ENCODE measurements at regions of chr15 and their contacts with region 1.

Region 1: DNA sequence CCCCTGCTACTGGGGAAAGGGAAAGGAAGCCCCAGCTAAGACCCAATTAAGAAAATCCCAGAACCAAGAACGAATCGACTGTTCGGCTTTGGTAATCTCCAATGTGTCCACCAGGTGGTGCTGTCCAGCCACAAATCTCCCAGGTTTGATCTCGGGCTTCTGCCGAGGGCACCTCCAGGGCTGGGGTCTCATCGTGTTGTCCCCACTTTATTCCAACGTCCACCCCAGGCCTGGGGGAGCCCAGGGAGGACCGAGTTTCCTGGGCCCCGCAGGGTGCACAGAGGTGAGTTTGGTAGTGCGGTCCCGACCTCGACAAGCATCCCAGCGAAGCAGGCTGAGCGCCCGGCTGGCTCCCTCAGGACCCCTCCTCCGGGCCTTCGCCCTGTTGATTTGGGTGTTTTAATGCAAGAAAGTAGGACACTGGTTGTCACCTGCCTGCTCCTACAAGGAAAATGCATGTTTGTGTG is 185.1 kb downstream of the GOLGA6L6 start:
- DNase-seq: peak; percentile 88 to 91 (median 89)
- ATAC-seq: peak; percentile 86
- H3K4me3 ChIP-seq: no peak overlapping the region
- H3K27ac ChIP-seq: no peak overlapping the region
- H3K4me1 ChIP-seq: peaks cover 0 to 23% of the 10 kb centered on the region in 2 experiments; a peak in 1 of 5 replicates
- H3K27me3 ChIP-seq: peaks cover 7 to 19% of the 10 kb centered on the region in 2 experiments; a peak in 4 of 5 replicates
- CTCF ChIP-seq: peak; percentile 94 to 98 (median 96)
- EP300 ChIP-seq: no peak
- POLR2A ChIP-seq: no peak
- RAD21 ChIP-seq: peak; percentile 89 to 98

Region 2: DNA sequence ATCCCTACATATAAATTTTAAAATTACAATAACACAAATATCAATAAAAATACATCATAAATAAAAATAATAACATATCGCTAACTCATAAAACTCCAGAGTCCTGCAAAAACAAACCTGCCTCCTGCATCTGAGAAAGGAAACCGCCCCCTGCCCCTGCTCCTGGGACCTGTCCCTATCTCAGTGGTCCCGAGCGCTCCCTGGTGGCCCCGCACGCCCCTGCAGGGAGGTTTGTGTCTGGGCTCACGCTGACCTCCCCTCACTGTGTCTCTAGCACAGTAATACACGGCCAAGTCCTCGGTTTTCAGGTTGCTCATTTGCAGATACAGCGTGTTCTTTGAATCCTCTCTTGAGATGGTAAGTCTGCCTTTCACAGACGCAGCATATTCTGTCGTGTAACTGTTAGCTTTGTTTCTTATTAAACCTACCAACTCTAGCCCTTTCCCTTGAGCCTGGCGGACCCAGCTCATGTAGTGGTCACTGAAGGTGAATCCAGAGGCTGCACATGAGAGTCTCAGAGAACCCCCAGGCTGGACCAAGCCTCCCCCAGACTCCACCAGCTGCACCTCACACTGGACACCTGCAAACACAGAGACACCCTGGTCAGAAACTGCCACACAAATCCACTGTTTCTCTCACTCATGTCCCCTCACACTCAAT is 369.0 kb before region 1 on chr15:
- CTCF ChIA-PET with region 1: no interaction called
- POLR2A ChIA-PET with region 1: no interaction called
- in situ Hi-C with region 1: no loop called
- intact Hi-C with region 1: no loop called
- DNase-seq: peak; percentile 30 to 52 (median 39)
- ATAC-seq: peak; percentile 89
- H3K4me3 ChIP-seq: no peak overlapping the region
- H3K27ac ChIP-seq: no peak overlapping the region
- H3K4me1 ChIP-seq: no peaks in the 10 kb centered on the region
- H3K27me3 ChIP-seq: no peaks in the 10 kb centered on the region
- CTCF ChIP-seq: peak; percentile 37 to 58 (median 56); a peak in 5 of 6 replicates
- EP300 ChIP-seq: no peak
- POLR2A ChIP-seq: no peak
- RAD21 ChIP-seq: no peak

Region 3: DNA sequence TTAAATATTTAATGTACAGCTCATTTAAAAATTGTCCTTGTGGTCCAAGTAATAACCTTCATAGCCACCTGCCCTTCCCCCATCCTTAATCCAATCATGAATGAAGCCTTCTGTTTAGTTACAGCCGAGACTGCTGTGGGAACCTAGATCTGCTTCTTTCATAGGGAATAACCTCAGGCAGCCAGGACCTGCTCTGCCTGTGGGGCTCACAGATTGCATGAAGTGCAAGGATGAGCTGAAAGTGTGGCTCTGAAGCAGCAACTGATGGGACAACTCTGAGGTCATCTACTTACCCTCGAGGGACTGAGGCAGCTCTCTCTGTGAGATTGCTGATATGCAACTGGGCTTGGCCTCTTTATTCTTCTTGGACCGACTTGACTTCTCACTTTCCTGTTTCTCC is 914.0 kb after region 1 on chr15:
- CTCF ChIA-PET with region 1: no interaction called
- POLR2A ChIA-PET with region 1: no interaction called
- in situ Hi-C with region 1: loop called (anchors 25 kb)
- intact Hi-C with region 1: no loop called
- DNase-seq: no peak
- ATAC-seq: peak; percentile 45
- H3K4me3 ChIP-seq: no peak overlapping the region
- H3K27ac ChIP-seq: no peak overlapping the region
- H3K4me1 ChIP-seq: no peaks in the 10 kb centered on the region
- H3K27me3 ChIP-seq: no peaks in the 10 kb centered on the region
- CTCF ChIP-seq: no peak
- EP300 ChIP-seq: no peak
- POLR2A ChIP-seq: no peak
- RAD21 ChIP-seq: no peak

Region 4: GRCh38 chr15:22224241-22224671 is 1867.8 kb after region 1 on chr15:
- CTCF ChIA-PET with region 1: interaction called, 43 read pairs
- POLR2A ChIA-PET with region 1: no interaction called
- in situ Hi-C with region 1: no loop called
- intact Hi-C with region 1: no loop called
- DNase-seq: peak in 1 of 4 experiments; percentile 24
- ATAC-seq: peak; percentile 8; the same call in 1 of the 3 replicates
- H3K4me3 ChIP-seq: no peak overlapping the region
- H3K27ac ChIP-seq: no peak overlapping the region
- H3K4me1 ChIP-seq: no peaks in the 10 kb centered on the region
- H3K27me3 ChIP-seq: peaks cover 4% of the 10 kb centered on the region in 2 experiments; a peak in 3 of 5 replicates
- CTCF ChIP-seq: peak; percentile 7 to 29 (median 21); a peak in 2 of 6 replicates
- EP300 ChIP-seq: no peak
- POLR2A ChIP-seq: no peak
- RAD21 ChIP-seq: no peak

Measured in K562 (cell line).